Activated T-helper 1 cell treated with anti-CD3 and anti-CD28 coated beads, Interleukin-12 subunit alpha, Interleukin-12 subunit beta, Interleukin-2, Interleukin-4 antibody, amounts not matched to agents 30 ng/mL and 10 ng/mL and 1 ng/mL, durations not matched to agents 14 hours and 24 hours and 36 hours (primary cell): ENCODE measurements at regions of chr17 and their contacts with region 1.

Region 1: DNA sequence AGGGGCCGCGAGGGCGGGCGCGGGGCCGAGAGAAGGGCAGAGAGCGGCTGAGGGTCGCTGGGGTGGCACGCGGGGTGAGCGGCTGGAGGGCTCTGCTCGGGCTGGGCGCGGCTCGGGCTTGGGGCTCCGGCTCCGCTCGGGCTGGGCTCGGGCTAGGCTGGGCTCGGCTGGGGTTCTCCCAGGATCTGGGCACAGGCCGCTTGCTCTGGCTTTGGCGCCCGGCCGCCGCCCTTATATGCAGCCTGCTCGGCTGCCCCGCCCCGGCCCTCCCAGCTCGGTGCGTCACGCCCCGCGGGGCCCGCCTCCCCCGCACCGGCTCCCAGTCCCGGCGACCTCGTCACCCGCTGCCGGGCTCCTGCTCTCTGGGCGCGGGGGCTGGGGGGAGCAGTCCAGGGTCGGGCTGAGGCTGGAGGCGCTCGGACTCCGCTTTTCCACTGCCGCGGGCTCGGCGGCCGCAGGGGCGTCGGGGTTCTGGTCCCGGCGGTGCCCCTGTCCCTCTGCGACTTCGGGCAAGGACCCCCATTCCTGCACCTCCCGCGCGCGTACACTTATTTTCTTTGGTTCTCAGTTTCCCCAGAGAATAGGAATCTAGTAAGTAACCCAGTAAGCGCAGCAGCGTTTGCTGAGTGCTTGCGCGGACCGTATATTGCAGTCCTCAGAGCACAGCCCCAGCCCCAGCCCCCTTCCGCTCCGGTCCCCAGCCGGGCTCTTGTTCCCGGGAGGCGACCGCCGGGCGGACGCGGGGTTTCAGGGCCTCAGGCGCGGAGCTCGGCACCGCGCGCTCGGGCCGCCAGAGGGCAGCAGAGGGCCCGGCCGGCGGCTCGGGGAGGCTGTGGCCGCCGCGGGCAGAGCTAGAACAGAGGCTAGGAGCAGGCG is at the start of gene RASD1:
- DNase-seq: peak; percentile 74
- H3K4me3 Mint-ChIP-seq: peak within 1 kb of the TSS; percentile 78
- H3K27ac Mint-ChIP-seq: peak within 1 kb of the TSS; percentile 61
- H3K4me1 Mint-ChIP-seq: peaks cover 14% of the 10 kb centered on the region
- H3K27me3 Mint-ChIP-seq: peaks cover 14% of the 10 kb centered on the region
- total RNA-seq, gene RASD1: 10.1 and 12.9 TPM in 2 replicates

Region 2: GRCh38 chr17:17356149-17356930 is 140.1 kb before region 1 on chr17:
- intact Hi-C with region 1: loop called (anchors 1 kb)
- DNase-seq: peak; percentile 55
- H3K4me3 Mint-ChIP-seq: no peak overlapping the region
- H3K27ac Mint-ChIP-seq: no peak overlapping the region
- H3K4me1 Mint-ChIP-seq: no peaks in the 10 kb centered on the region
- H3K27me3 Mint-ChIP-seq: peaks cover 19% of the 10 kb centered on the region

Region 3: DNA sequence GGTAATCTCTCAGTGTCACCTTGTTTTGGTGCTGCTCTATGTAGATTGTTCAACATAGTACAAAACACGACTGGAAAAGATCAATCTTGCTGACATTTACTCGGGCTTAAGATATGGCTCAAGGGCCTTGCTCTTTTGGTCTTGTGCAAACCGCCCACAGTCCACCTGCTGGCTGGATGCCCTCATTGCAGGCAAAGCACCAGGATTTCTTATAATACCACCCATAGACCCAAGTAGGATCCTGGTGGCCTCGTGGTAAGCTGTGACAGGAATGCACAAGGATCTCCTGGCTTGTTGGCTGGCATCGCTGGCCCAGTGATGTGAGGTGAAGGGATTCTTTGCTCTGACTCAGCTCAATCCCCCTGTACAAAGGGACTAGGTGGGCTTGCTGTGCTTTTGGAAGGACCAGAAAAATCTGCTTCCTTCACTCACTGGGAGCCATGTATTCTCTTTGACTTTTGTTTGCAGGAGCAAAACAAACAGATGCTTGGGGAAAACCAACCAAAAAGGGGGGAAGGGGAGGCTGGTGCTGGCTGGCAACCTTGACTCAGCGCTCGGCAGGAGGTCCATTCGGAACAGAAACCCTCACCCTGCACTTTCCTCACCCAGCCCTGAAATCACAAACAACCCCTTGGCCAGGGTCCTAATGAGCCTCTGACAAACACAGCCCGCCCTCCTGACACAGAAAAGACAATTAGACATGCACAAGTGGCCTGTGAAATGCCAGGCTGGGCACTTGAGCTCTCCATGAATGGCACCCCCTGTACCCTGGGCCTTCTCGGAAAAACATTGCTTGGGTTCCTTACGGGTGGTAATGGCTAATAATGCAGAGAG is 56.2 kb before region 1 on chr17:
- intact Hi-C with region 1: loop called (anchors 2 kb)
- DNase-seq: peak; percentile 48
- H3K4me3 Mint-ChIP-seq: no peak overlapping the region
- H3K27ac Mint-ChIP-seq: no peak overlapping the region
- H3K4me1 Mint-ChIP-seq: no peaks in the 10 kb centered on the region
- H3K27me3 Mint-ChIP-seq: no peaks in the 10 kb centered on the region

Region 4: DNA sequence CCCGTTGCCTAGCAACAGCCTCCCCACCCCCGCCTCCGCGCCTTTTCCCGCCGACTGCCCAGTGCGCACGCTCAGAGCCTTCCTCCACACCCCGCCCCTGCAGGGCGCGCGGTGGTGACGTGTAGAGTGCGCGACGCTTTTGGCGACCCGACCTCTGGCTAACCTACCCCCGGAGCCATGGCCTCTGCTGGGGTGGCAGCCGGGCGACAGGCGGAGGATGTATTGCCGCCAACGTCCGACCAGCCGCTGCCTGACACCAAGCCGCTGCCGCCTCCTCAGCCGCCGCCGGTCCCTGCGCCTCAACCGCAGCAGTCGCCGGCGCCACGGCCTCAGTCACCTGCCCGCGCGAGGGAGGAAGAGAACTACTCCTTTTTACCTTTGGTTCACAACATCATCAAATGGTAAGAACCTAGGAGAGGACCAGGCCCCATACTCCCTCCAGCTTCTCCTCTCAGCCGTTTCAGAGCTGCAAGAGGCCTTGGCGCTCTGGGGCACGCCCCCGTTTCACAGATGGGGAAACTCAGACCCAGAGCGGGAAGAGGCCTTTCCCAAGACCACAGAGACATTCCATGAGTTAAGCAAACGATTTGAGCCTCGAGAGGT is 19.5 kb before region 1 on chr17 and contains the start of gene MED9:
- intact Hi-C with region 1: loop called (anchors 1 kb)
- DNase-seq: peak; percentile 91
- H3K4me3 Mint-ChIP-seq: peak within 1 kb of the TSS; percentile 95
- H3K27ac Mint-ChIP-seq: peak within 1 kb of the TSS; percentile 90
- H3K4me1 Mint-ChIP-seq: peaks cover 49% of the 10 kb centered on the region
- H3K27me3 Mint-ChIP-seq: peaks cover 16% of the 10 kb centered on the region
- total RNA-seq, gene MED9: 13.8 and 15.2 TPM in 2 replicates

Region 5: GRCh38 chr17:17484451-17484899 is 12.0 kb before region 1 on chr17:
- intact Hi-C with region 1: loop called (anchors 1 kb)
- DNase-seq: no peak
- H3K4me3 Mint-ChIP-seq: peak overlapping the region; percentile 57
- H3K27ac Mint-ChIP-seq: peak overlapping the region; percentile 76
- H3K4me1 Mint-ChIP-seq: peaks cover 47% of the 10 kb centered on the region
- H3K27me3 Mint-ChIP-seq: no peaks in the 10 kb centered on the region

Region 6: GRCh38 chr17:17568749-17569195 is 72.3 kb after region 1 on chr17:
- intact Hi-C with region 1: loop called (anchors 5 kb)
- DNase-seq: peak; percentile 34
- H3K4me3 Mint-ChIP-seq: no peak overlapping the region
- H3K27ac Mint-ChIP-seq: peak overlapping the region; percentile 34
- H3K4me1 Mint-ChIP-seq: no peaks in the 10 kb centered on the region
- H3K27me3 Mint-ChIP-seq: peaks cover 1% of the 10 kb centered on the region

Region 7: GRCh38 chr17:17641621-17642409 is 145.4 kb after region 1 on chr17:
- intact Hi-C with region 1: loop called (anchors 1 kb)
- DNase-seq: peak; percentile 67
- H3K4me3 Mint-ChIP-seq: no peak overlapping the region
- H3K27ac Mint-ChIP-seq: no peak overlapping the region
- H3K4me1 Mint-ChIP-seq: no peaks in the 10 kb centered on the region
- H3K27me3 Mint-ChIP-seq: peaks cover 7% of the 10 kb centered on the region